Activated T-helper 1 cell treated with anti-CD3 and anti-CD28 coated beads, Interleukin-12 subunit alpha, Interleukin-12 subunit beta, Interleukin-2, Interleukin-4 antibody, amounts not matched to agents 30 ng/mL and 10 ng/mL and 1 ng/mL, durations not matched to agents 14 hours and 24 hours and 36 hours (primary cell): ENCODE measurements at regions of chr11 and their contacts with region 1.

Region 1: DNA sequence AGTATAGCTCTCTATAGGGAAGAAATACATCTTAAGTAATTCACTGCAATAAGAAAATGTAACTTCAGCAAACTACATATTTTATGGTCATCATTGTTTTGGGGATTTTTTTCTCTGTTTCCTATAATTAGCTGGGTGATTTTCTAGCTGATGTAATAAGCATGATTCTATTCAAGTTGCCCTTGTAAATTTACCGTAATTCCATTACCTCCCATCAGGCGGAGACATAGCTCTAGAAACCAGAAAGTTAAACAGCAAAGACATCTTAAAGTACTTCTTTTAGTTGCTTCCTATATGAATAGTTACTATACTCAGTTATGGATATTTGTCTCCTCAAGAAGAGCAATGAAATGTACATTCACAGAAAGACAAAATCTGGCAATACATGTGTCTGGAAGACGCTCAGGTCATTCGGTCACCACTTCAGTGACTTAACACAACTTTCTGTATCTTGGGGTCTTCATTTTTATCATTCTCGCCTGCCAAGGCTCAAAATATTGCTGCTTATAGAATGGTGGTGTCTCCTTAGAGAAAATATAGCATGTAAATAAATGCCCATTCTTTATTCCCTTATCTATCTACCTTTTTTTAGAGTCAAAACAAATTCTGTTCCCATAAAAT is 239.9 kb upstream of the ZC3H12C start:
- DNase-seq: no peak
- H3K4me3 Mint-ChIP-seq: no peak overlapping the region
- H3K27ac Mint-ChIP-seq: no peak overlapping the region
- H3K4me1 Mint-ChIP-seq: no peaks in the 10 kb centered on the region
- H3K27me3 Mint-ChIP-seq: peaks cover 2% of the 10 kb centered on the region

Region 2: GRCh38 chr11:109734566-109734965 is 118.7 kb before region 1 on chr11:
- intact Hi-C with region 1: no loop called
- DNase-seq: no peak
- H3K4me3 Mint-ChIP-seq: no peak overlapping the region
- H3K27ac Mint-ChIP-seq: no peak overlapping the region
- H3K4me1 Mint-ChIP-seq: no peaks in the 10 kb centered on the region
- H3K27me3 Mint-ChIP-seq: no peaks in the 10 kb centered on the region

Region 3: GRCh38 chr11:109939166-109939810 is 86.0 kb after region 1 on chr11:
- intact Hi-C with region 1: loop called (anchors 1 kb)
- DNase-seq: no peak
- H3K4me3 Mint-ChIP-seq: no peak overlapping the region
- H3K27ac Mint-ChIP-seq: no peak overlapping the region
- H3K4me1 Mint-ChIP-seq: no peaks in the 10 kb centered on the region
- H3K27me3 Mint-ChIP-seq: peaks cover 11% of the 10 kb centered on the region